Kidney (tissue), 22 donors: ENCODE measurements at regions of chr10 and their contacts with region 1.

Region 1: DNA sequence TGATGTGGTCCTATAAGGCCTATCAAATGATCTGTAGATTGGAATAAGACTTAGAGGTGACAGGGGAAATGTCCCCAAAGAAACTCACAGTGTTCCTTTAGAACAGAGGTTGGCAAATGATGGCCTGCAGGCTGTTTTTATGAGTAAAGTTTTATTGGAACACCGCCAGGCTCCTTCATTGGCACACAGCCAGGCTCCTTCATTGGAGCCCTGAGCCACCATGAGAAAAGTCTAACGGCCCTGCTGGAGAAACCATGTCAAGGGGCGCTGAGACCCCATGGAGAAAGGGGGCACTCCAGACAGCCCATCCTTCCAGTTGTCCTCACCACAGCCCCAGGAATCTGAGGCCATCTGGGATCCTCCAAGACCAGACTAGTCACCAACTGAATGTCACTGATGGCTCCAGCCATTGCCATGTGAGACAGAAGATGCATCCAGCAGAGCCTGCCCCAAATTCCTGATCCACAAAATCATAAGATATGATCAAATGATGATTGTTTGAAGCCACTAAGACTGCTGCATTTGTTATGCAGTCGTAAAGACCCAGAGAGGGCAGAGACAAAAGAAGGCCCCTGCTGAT is 88.2 kb upstream of the GPR26 start:
- DNase-seq: no peak
- H3K4me3 ChIP-seq: no peak overlapping the region
- H3K27ac ChIP-seq: no peak overlapping the region
- H3K4me1 ChIP-seq: no peaks in the 10 kb centered on the region
- H3K27me3 ChIP-seq: peaks cover 4% of the 10 kb centered on the region
- CTCF ChIP-seq: no peak

Region 2: GRCh38 chr10:123729523-123729922 is 151.6 kb after region 1 on chr10:
- intact Hi-C with region 1: no loop called
- DNase-seq: no peak
- H3K4me3 ChIP-seq: no peak overlapping the region
- H3K27ac ChIP-seq: no peak overlapping the region
- H3K4me1 ChIP-seq: no peaks in the 10 kb centered on the region
- H3K27me3 ChIP-seq: no peaks in the 10 kb centered on the region
- CTCF ChIP-seq: no peak

Region 3: DNA sequence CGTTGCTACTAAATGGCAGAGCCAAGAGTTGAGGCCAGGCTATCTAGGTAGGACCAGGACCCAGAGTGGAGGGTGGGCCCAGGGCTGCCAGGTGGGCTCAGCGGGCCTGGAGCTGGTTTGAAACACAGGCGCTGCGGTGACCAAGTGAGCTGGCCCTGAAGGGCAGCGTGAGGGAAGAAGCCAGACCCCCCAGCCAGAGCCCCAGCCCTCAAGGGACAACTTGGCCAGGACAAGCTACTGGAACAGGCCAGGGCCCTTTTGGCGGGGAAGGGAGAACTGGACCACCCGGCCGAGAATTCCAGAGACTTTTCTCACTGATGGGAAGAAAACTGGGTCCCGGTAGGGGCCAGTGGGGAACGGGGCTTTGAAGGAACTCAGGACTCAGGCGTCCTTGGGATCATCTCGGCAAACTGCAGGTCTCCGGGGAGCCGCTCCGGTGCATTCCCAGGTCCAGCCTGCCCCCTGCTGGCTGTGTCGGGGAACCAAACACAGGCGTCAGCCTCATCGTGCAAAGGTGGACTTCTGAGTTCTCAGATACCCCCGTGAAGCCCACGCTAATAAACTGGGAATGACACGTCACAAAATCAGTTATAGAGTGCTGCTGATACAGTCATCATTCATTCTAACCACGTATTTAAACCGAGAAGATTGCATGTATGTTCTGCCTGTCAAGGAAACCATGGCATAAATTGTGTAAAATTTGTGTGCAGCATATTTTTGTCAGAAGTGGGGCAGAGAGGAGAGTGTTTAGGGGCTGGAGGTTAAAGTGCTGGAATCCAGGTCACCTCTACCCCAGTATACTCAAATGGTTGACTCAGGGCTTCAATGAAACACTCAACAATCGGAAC is 389.6 kb after region 1 on chr10:
- intact Hi-C with region 1: loop called (anchors 5 kb)
- DNase-seq: peak; percentile 75 to 88 (median 82)
- H3K4me3 ChIP-seq: no peak overlapping the region
- H3K27ac ChIP-seq: no peak overlapping the region
- H3K4me1 ChIP-seq: no peaks in the 10 kb centered on the region
- H3K27me3 ChIP-seq: peaks cover 7% of the 10 kb centered on the region
- CTCF ChIP-seq: peak; percentile 94

Region 4: DNA sequence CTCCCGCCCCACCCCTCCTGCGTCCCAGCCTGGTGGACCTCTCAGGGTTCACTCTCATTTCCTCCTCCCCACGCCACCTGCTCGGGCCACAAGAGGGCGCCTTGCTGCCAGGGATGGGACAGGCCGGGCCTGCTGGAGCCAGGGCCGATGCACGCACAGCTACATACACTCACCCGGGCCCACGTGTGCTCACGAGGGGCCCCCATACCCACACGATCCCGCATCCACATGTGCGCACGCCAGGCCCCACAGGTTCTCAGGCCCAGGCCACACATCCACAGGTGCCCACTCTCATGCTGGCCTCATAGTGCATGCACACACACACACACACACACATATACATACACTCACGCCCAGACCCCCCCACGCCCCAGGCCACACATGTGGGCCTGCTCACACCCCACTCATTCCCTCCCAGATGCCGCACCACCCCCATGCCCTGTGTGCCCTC is 952.3 kb after region 1 on chr10:
- intact Hi-C with region 1: no loop called
- DNase-seq: peak; percentile 86 to 94 (median 92)
- H3K4me3 ChIP-seq: no peak overlapping the region
- H3K27ac ChIP-seq: peak overlapping the region in 1 of 2 donors; percentile 4
- H3K4me1 ChIP-seq: peaks cover 0 to 2% (median 0%) of the 10 kb centered on the region in 3 donors
- H3K27me3 ChIP-seq: no peaks in the 10 kb centered on the region
- CTCF ChIP-seq: peak; percentile 96